Activated B cell treated with CpG ODN at 0.5 μM for 24 hours (primary cell): ENCODE measurements at regions of chrX and their contacts with region 1.

Region 1: DNA sequence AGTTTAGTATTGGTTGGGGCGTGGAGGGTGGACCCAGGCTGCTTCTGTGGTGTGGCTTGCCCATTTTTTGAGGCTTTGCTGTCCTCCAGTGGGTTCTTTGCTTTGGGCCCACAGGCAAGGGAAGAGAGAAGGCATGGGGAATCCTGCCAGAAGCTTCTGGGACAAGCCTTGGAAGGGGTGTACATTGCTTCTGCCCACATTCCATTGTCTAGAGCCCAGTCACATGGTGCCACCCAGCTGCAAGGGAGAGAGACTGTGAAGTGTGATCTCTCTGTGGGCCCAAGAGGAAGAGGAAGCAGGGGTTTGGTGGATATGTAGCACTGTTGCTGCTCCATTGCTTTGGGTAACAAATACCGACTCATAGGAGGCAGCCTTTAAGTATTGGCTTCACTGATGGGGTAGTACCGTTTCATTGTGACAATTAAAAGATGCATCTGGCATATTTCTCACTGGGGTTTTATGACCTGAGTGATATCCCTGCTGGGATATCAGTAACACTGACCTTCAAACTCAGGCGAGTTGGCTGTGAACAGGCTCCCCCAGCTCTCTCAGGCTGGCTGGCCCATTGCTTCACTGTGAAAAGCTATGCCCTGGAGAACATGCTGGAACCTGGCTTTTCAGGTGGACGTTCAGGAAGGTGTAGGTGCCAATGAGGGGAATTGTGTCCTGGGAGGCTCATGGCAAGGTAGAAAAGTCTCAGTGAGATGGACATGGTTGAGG is 85.9 kb downstream of the CLDN34 start:
- DNase-seq: no peak
- ATAC-seq: peak; percentile 78
- H3K4me3 Mint-ChIP-seq: no peak overlapping the region
- H3K27ac Mint-ChIP-seq: peak overlapping the region; percentile 78
- H3K4me1 Mint-ChIP-seq: peaks cover 51% of the 10 kb centered on the region
- H3K27me3 Mint-ChIP-seq: no peaks in the 10 kb centered on the region
- CTCF ChIP-seq: no peak

Region 2: GRCh38 chrX:10014462-10015356 is 38.4 kb before region 1 on chrX:
- CTCF ChIA-PET with region 1: no interaction called
- POLR2A ChIA-PET with region 1: interaction called, 5 read pairs
- intact Hi-C with region 1: loop called (anchors 5 kb)
- DNase-seq: peak; percentile 81
- ATAC-seq: peak; percentile 83
- H3K4me3 Mint-ChIP-seq: peak overlapping the region; percentile 83
- H3K27ac Mint-ChIP-seq: peak overlapping the region; percentile 69
- H3K4me1 Mint-ChIP-seq: peaks cover 63% of the 10 kb centered on the region
- H3K27me3 Mint-ChIP-seq: no peaks in the 10 kb centered on the region
- CTCF ChIP-seq: no peak

Region 3: GRCh38 chrX:10030570-10030969 is 22.5 kb before region 1 on chrX:
- CTCF ChIA-PET with region 1: no interaction called
- POLR2A ChIA-PET with region 1: no interaction called
- intact Hi-C with region 1: loop called (anchors 2 kb)
- DNase-seq: no peak
- ATAC-seq: no peak
- H3K4me3 Mint-ChIP-seq: no peak overlapping the region
- H3K27ac Mint-ChIP-seq: no peak overlapping the region
- H3K4me1 Mint-ChIP-seq: peaks cover 39% of the 10 kb centered on the region
- H3K27me3 Mint-ChIP-seq: no peaks in the 10 kb centered on the region
- CTCF ChIP-seq: no peak